ENCODE measurements at regions of chr1 and their contacts with region 1.

Region 1: DNA sequence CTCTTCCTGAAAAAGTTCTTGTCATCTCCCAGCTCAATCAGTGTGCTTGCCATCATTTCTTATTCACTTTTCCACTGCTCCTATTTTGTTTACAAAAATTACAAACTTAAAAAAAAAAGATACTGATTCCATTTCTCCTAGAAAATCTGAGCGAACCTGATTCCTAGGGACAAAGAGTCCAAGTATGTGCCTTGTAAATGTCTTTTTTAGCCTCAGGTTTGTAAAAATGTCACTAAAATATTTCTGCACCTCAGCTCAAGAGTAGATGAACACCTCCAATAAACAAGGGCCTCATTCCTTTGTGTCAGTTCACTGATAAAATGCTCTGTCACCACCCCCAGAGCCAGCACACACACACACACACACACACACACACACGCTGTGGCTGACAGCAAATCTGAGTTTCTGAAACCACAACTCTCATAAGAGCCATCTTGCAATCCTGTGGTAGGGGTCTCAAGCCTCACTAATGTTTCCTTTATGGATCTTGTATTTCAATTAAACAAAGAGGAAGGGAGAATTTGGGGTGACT is 299.2 kb downstream of the PBX1 start:
- DNase-seq: peak; percentile 16 to 28
- ATAC-seq: peak in 5 of 8 donors; percentile 49 to 79 (median 68)
- H3K4me3 ChIP-seq: no peak overlapping the region
- H3K27ac ChIP-seq: peak overlapping the region in 7 of 10 donors; percentile 4 to 66 (median 48)
- H3K4me1 ChIP-seq: peaks cover 0 to 38% (median 30%) of the 10 kb centered on the region in 9 donors
- H3K27me3 ChIP-seq: no peaks in the 10 kb centered on the region
- CTCF ChIP-seq: no peak

Region 2: DNA sequence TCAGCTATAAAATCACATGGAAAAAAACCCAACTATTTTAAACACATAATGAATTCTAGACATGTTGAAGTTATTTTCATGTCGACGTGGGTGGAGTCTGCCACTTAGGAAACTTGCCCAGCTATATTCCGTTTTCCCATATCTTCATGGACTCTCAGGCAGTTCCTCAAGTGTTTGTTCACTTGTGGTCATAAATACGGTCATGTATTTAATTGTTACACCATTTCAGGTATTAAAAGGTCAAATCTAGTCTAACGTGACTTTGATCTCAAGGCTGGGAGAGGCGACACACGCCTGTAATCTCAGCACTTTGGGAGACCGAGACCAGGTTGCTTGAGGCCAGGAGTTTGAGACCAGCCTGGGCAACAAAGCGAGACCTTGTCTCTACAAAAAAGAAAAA is 47.7 kb after region 1 on chr1:
- intact Hi-C with region 1: loop called in 1 of 10 experiments (anchors 10 kb)
- DNase-seq: no peak
- ATAC-seq: no peak
- H3K4me3 ChIP-seq: no peak overlapping the region
- H3K27ac ChIP-seq: no peak overlapping the region
- H3K4me1 ChIP-seq: peaks cover 0 to under 1% (median 0%) of the 10 kb centered on the region in 9 donors
- H3K27me3 ChIP-seq: no peaks in the 10 kb centered on the region
- CTCF ChIP-seq: no peak

Region 3: DNA sequence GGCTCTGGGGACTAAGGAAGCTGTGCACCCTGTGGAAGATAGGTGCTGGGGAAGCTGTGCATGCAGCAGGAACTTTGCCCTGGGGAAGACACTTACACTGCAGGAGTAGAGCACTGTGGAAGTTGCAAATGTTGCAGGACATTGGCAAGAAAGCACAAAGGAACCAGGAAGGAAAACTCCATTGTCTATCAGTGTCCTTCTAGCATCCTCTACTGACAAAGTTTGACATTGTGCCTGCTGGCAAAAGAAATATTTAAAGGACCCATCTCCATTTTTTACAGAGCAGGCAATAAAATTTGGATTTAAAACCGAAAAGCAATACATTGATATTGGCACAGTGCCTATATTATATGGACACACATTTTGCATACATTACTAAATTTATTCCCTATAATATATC is 94.9 kb after region 1 on chr1:
- intact Hi-C with region 1: loop called in 1 of 10 experiments (anchors 5 kb)
- DNase-seq: no peak
- ATAC-seq: peak in 3 of 8 donors; percentile 29 to 54 (median 49)
- H3K4me3 ChIP-seq: no peak overlapping the region
- H3K27ac ChIP-seq: peak overlapping the region in 1 of 10 donors; percentile 29
- H3K4me1 ChIP-seq: peaks cover 0 to 40% (median 20%) of the 10 kb centered on the region in 9 donors
- H3K27me3 ChIP-seq: no peaks in the 10 kb centered on the region
- CTCF ChIP-seq: peak in 6 of 9 donors; percentile 22 to 55 (median 34)